ENCODE measurements at regions of chr17 and their contacts with region 1.

Region 1: GRCh38 chr17:42677921-42678781 is 1.4 kb upstream of the PLEKHH3 start:
- DNase-seq: peak in 1 of 2 donors; percentile 95
- H3K4me3 ChIP-seq: peak overlapping the region; percentile 70 to 92
- H3K27ac ChIP-seq: peak overlapping the region; percentile 98
- H3K4me1 ChIP-seq: peaks cover 80% of the 10 kb centered on the region
- H3K27me3 ChIP-seq: no peaks in the 10 kb centered on the region
- CTCF ChIP-seq: no peak
- POLR2A ChIP-seq: peak in 1 of 2 donors; percentile 45

Region 2: GRCh38 chr17:42609182-42609813 is 68.9 kb before region 1 on chr17 and contains the starts of genes RETREG3 and TUBG1:
- intact Hi-C with region 1: loop called (anchors 5 kb)
- DNase-seq: peak; percentile 98
- H3K4me3 ChIP-seq: peak within 1 kb of the TSS; percentile 77 to 98
- H3K27ac ChIP-seq: peak within 1 kb of the TSS; percentile 96
- H3K4me1 ChIP-seq: peaks cover 47% of the 10 kb centered on the region
- H3K27me3 ChIP-seq: no peaks in the 10 kb centered on the region
- CTCF ChIP-seq: peak in 2 of 3 experiments; percentile 15 to 28
- POLR2A ChIP-seq: peak in 1 of 2 donors; percentile 80
- total RNA-seq, gene RETREG3: 75.4 TPM
- total RNA-seq, gene TUBG1: 33.9 TPM